Panc1 (cell line): ENCODE measurements at regions of chr6 and their contacts with region 1.

Region 1: DNA sequence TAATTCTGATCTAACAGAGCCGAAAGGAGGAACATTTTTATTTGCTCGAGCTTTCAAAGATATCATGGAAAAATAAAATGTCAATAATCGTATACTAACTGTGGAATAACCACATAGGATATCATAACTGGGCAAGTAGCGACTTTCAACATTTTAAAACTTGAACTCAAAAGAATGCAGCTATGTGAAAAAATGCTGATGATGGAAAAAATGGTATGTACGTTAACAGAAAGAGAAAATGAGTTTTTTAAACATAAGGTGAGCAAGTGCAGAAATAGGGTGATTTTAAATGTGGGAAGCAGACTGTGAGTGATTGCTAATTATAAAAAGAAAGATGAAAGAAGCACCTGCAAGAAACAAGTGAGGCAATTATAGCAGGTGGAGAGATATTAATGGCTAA is 238.3 kb upstream of the HSF2 start:
- DNase-seq: no peak
- ATAC-seq: no peak
- H3K4me3 ChIP-seq: no peak overlapping the region
- H3K27ac ChIP-seq: no peak overlapping the region
- H3K4me1 ChIP-seq: no peaks in the 10 kb centered on the region
- H3K27me3 ChIP-seq: no peaks in the 10 kb centered on the region
- CTCF ChIP-seq: no peak

Region 2: DNA sequence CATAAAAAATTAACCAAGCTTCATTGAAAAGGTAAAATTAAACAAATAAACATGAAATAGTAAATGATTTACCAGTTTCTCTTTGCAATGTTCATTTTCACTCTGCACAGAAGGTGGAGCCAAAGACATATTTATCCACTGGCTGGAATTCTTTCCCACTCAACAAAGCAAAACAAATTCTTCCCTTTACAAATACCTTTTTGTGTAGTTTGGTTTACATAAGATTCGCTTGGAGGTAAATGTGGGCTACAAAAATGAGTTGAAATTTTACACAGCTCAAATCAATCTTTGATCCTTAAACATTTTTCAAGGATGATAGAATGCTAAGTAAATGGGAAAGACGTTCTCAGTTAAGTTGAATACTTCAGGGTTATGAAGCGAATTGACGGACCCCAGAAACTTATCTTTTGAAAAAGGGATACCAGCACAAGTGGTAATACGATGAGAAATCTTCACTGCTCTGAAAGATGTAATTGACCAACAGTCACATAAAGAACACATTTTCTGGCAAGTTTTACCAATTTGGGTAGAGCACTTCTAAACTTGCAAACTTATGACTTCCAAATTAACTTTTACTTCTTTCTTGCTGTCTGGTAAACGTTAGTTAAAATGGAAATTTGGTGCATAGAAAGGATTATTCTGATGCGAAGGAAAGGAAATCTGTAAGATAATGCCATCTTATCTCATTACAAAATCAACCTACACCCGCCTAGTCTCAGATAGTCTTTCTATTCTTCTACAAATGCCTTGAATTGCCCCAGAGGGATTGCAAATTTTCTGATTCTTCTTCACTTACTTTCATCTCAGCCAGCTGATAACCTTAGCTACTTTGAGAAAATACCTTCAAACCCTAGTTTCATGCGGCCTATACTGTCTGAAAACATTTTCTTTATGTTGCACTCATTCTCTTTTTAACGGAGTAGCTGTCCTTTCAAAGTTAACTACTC is 730.3 kb before region 1 on chr6:
- CTCF ChIA-PET with region 1: no interaction called
- POLR2A ChIA-PET with region 1: no interaction called
- in situ Hi-C with region 1: no loop called
- intact Hi-C with region 1: no loop called
- DNase-seq: no peak
- ATAC-seq: no peak
- H3K4me3 ChIP-seq: no peak overlapping the region
- H3K27ac ChIP-seq: no peak overlapping the region
- H3K4me1 ChIP-seq: no peaks in the 10 kb centered on the region
- H3K27me3 ChIP-seq: peaks cover 9% of the 10 kb centered on the region
- CTCF ChIP-seq: peak; percentile 74; the same call in 1 of the 2 replicates

Region 3: DNA sequence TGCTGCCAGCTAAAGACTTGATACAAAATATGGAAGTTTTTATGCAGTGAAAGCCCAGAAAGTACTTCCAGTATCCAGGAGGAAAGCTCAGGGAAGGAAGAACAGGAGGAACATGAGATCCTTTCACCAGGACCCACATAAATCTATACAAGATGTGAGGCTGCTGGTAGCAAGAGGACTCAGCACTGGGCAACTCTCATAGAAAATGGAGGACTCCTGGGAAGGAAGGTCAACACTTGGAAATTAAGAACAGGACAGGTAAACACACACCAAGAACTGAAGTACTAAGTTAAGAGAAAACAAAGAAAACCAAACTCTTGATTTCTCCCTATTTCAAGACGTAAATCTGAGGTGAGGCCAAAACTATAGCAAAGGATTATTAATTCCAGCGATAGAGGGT is 17.9 kb after region 1 on chr6:
- CTCF ChIA-PET with region 1: interaction called, 14 read pairs
- POLR2A ChIA-PET with region 1: no interaction called
- in situ Hi-C with region 1: no loop called
- intact Hi-C with region 1: no loop called
- DNase-seq: no peak
- ATAC-seq: no peak
- H3K4me3 ChIP-seq: no peak overlapping the region
- H3K27ac ChIP-seq: no peak overlapping the region
- H3K4me1 ChIP-seq: no peaks in the 10 kb centered on the region
- H3K27me3 ChIP-seq: no peaks in the 10 kb centered on the region
- CTCF ChIP-seq: no peak

Region 4: GRCh38 chr6:122184401-122184827 is 23.3 kb after region 1 on chr6:
- CTCF ChIA-PET with region 1: interaction called, 13 read pairs
- POLR2A ChIA-PET with region 1: no interaction called
- in situ Hi-C with region 1: no loop called
- intact Hi-C with region 1: no loop called
- DNase-seq: no peak
- ATAC-seq: peak; percentile 72
- H3K4me3 ChIP-seq: no peak overlapping the region
- H3K27ac ChIP-seq: no peak overlapping the region
- H3K4me1 ChIP-seq: no peaks in the 10 kb centered on the region
- H3K27me3 ChIP-seq: no peaks in the 10 kb centered on the region
- CTCF ChIP-seq: peak; percentile 43; the same call in 1 of the 2 replicates